Naive thymus-derived CD4-positive, alpha-beta T cell (primary cell): ENCODE measurements at regions of chr2 and their contacts with region 1.

Region 1: GRCh38 chr2:140041239-140041638 is 1261.0 kb upstream of the NXPH2 start:
- DNase-seq: no peak
- ATAC-seq: no peak
- H3K4me3 ChIP-seq: no peak overlapping the region
- H3K4me3 Mint-ChIP-seq: no peak overlapping the region
- H3K27ac ChIP-seq: no peak overlapping the region
- H3K27ac Mint-ChIP-seq: no peak overlapping the region
- H3K4me1 ChIP-seq: no peaks in the 10 kb centered on the region
- H3K4me1 Mint-ChIP-seq: no peaks in the 10 kb centered on the region
- H3K27me3 ChIP-seq: no peaks in the 10 kb centered on the region
- H3K27me3 Mint-ChIP-seq: no peaks in the 10 kb centered on the region

Region 2: DNA sequence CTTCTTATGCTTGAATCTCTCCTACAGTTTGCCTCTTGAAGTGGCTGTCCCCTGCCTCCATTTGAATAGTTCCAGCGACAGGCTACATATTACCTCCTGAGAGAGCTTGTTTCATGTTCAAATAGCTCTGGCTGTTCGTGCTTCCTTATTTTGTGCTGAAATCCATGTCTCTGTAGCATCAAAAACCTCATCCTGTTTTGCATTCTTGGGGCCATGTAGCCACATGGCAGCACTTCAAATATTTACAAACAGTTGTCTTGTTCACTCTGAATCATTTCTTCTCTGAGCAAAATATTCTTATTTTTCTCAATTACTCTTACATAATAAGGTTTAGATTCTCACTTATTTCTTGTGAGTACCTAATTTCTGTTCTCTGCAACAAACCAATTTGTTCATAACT is 17.9 kb before region 1 on chr2:
- CTCF ChIA-PET with region 1: no interaction called
- POLR2A ChIA-PET with region 1: no interaction called
- intact Hi-C with region 1: loop called in 1 of 2 experiments (anchors 2 kb)
- DNase-seq: no peak
- ATAC-seq: no peak
- H3K4me3 ChIP-seq: no peak overlapping the region
- H3K4me3 Mint-ChIP-seq: no peak overlapping the region
- H3K27ac ChIP-seq: no peak overlapping the region
- H3K27ac Mint-ChIP-seq: no peak overlapping the region
- H3K4me1 ChIP-seq: no peaks in the 10 kb centered on the region
- H3K4me1 Mint-ChIP-seq: no peaks in the 10 kb centered on the region
- H3K27me3 ChIP-seq: no peaks in the 10 kb centered on the region
- H3K27me3 Mint-ChIP-seq: no peaks in the 10 kb centered on the region

Region 3: GRCh38 chr2:140108706-140109475 is 67.7 kb after region 1 on chr2:
- CTCF ChIA-PET with region 1: no interaction called
- POLR2A ChIA-PET with region 1: no interaction called
- intact Hi-C with region 1: no loop called
- DNase-seq: no peak
- ATAC-seq: no peak
- H3K4me3 ChIP-seq: no peak overlapping the region
- H3K4me3 Mint-ChIP-seq: no peak overlapping the region
- H3K27ac ChIP-seq: no peak overlapping the region
- H3K27ac Mint-ChIP-seq: no peak overlapping the region
- H3K4me1 ChIP-seq: no peaks in the 10 kb centered on the region
- H3K4me1 Mint-ChIP-seq: no peaks in the 10 kb centered on the region
- H3K27me3 ChIP-seq: no peaks in the 10 kb centered on the region
- H3K27me3 Mint-ChIP-seq: no peaks in the 10 kb centered on the region